ENCODE measurements at regions of chr16 and their contacts with region 1.

Region 1: GRCh38 chr16:23729503-23730424 is 16.7 kb upstream of the ERN2 start:
- DNase-seq: peak; percentile 15
- H3K4me3 ChIP-seq: no peak overlapping the region
- H3K27ac ChIP-seq: no peak overlapping the region
- H3K4me1 ChIP-seq: no peaks in the 10 kb centered on the region
- H3K27me3 ChIP-seq: no peaks in the 10 kb centered on the region
- CTCF ChIP-seq: no peak

Region 2: DNA sequence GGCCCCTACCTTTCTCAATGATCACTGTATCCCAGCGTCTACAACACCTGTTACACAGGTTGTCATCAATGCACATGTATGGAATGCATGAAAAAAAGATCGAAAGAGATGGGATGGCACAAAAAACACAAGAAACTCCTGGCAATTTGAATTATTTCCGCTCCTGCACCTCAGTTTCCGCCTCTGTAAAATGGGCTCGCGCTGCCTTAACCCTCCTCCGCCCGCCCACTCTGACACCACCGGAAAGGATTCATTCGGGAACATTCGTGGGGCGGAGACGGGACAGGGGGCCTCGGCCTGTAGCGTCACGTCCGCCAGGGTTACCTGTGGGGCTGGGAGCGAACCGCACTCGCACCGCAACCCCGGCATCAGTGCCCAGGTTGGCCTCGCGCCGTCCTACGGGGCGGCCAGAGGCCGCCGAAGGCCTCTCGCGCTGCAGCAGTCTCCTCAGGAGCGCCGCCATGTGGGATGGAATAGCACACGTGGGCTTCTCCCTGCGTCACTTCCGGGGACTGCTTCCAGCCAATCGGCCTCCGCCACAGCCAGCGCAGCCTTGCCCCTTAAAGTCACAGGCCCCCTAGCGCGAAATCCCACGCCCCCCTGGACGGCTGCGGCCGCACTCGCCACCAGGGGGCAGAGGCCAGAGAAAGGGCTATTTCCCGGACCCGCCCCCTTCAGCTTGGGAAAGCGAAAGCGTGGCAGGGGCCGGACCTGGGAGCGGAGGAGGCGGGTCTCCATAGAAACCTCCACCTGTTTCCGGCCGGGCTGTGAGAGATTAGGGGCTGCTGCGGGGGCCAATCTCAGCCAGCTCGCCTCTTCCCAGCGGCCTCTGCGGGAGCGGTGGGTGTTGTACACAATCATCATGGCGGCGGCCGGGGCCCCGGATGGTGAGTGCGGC is 172.6 kb before region 1 on chr16 and contains the starts of genes EARS2 and UBFD1:
- CTCF ChIA-PET with region 1: no interaction called
- dilution Hi-C with region 1: no loop called
- in situ Hi-C with region 1: no loop called
- intact Hi-C with region 1: loop called (anchors 5 kb)
- DNase-seq: peak; percentile 99
- H3K4me3 ChIP-seq: peak within 1 kb of the TSS; percentile 92 to 96 (median 95)
- H3K27ac ChIP-seq: peak within 1 kb of the TSS; percentile 91
- H3K4me1 ChIP-seq: peaks cover 11% of the 10 kb centered on the region
- H3K27me3 ChIP-seq: no peaks in the 10 kb centered on the region
- CTCF ChIP-seq: peak; percentile 75 to 96
- total RNA-seq, gene EARS2: 30.1 to 47.7 TPM
- total RNA-seq, gene UBFD1: 57.3 to 79.7 TPM

Region 3: GRCh38 chr16:23668225-23668624 is 61.5 kb before region 1 on chr16:
- CTCF ChIA-PET with region 1: no interaction called
- dilution Hi-C with region 1: no loop called
- in situ Hi-C with region 1: no loop called
- intact Hi-C with region 1: no loop called
- DNase-seq: no peak
- H3K4me3 ChIP-seq: no peak overlapping the region
- H3K27ac ChIP-seq: no peak overlapping the region
- H3K4me1 ChIP-seq: peaks cover 21% of the 10 kb centered on the region
- H3K27me3 ChIP-seq: no peaks in the 10 kb centered on the region
- CTCF ChIP-seq: no peak

Region 4: DNA sequence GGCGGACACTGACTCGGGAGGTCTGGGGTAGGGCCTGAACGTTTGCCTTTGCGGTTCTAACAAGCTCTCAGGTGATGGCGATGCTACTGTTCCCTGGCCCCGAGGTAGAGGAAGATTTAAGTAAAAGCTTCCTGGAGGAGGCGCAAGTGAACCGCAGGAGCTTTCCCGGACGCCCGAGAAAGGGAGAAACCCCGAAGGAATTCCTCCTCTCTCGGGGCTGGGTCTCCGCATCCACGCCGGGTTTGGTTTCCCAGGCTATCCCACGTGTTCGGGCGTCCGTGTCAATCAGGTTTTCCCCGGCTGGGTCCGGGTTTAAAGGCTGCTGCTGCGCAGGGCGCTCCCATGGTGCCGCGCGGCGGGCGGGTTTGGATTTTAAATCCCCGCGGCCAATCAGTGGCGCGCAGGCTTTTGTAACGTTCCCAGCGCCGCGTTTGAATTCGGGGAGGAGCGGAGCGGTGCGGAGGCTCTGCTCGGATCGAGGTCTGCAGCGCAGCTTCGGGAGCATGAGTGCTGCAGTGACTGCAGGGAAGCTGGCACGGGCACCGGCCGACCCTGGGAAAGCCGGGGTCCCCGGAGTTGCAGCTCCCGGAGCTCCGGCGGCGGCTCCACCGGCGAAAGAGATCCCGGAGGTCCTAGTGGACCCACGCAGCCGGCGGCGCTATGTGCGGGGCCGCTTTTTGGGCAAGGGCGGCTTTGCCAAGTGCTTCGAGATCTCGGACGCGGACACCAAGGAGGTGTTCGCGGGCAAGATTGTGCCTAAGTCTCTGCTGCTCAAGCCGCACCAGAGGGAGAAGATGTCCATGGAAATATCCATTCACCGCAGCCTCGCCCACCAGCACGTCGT is 51.1 kb before region 1 on chr16 and contains the start of gene PLK1:
- CTCF ChIA-PET with region 1: interaction called, 9 read pairs
- dilution Hi-C with region 1: no loop called
- in situ Hi-C with region 1: no loop called
- intact Hi-C with region 1: loop called (anchors 5 kb)
- DNase-seq: peak; percentile 86
- H3K4me3 ChIP-seq: peak within 1 kb of the TSS; percentile 66 to 98 (median 88)
- H3K27ac ChIP-seq: peak within 1 kb of the TSS; percentile 60
- H3K4me1 ChIP-seq: peaks cover 22% of the 10 kb centered on the region
- H3K27me3 ChIP-seq: no peaks in the 10 kb centered on the region
- CTCF ChIP-seq: peak; percentile 12 to 55
- total RNA-seq, gene PLK1: 2.0 to 57.9 TPM

Region 5: DNA sequence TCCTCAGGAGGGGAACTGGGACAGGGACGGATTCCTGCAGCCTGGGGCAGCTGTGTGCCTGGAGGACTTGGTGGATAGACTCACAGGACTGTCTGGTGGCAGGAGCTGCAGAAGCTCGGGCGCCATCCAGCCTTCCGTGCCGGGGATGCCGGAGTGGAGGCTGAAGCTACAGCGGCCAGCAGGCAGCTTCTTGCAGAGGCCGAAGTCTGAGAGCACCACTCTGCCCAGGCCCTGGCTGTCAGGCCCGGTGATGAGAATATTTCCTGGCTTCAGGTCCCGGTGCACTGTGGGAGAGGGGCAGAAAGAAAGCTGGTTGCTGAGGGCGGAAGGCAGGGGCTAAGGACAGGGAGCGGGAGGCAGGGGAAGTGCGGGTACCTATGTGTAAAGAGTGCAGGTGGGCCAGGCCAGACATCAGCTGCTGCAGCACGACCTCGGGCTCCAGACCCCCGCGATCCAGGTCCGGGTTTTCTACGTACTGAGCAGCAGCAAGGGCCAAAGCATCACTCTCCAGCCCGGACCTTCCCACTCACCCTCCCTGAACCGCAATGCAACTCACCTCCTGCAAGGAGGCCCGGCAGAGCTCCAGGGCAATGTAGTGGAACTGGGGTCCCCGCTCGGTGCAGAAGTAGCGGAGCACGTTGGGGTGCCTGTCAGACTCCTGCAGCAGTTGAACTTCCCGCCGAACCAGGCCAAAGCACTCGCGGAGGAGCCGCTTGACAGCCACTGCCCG is 35.0 kb before region 1 on chr16:
- CTCF ChIA-PET with region 1: no interaction called
- dilution Hi-C with region 1: loop called (anchors 5 kb)
- in situ Hi-C with region 1: no loop called
- intact Hi-C with region 1: no loop called
- DNase-seq: no peak
- H3K4me3 ChIP-seq: no peak overlapping the region
- H3K27ac ChIP-seq: no peak overlapping the region
- H3K4me1 ChIP-seq: no peaks in the 10 kb centered on the region
- H3K27me3 ChIP-seq: no peaks in the 10 kb centered on the region
- CTCF ChIP-seq: no peak

Region 6: GRCh38 chr16:23803591-23804123 is 73.9 kb after region 1 on chr16:
- CTCF ChIA-PET with region 1: interaction called, 3 read pairs
- dilution Hi-C with region 1: no loop called
- in situ Hi-C with region 1: loop called in 1 of 2 experiments (anchors 10 kb)
- intact Hi-C with region 1: no loop called
- DNase-seq: peak; percentile 38
- H3K4me3 ChIP-seq: no peak overlapping the region
- H3K27ac ChIP-seq: no peak overlapping the region
- H3K4me1 ChIP-seq: no peaks in the 10 kb centered on the region
- H3K27me3 ChIP-seq: no peaks in the 10 kb centered on the region
- CTCF ChIP-seq: peak; percentile 70 to 85

Region 7: DNA sequence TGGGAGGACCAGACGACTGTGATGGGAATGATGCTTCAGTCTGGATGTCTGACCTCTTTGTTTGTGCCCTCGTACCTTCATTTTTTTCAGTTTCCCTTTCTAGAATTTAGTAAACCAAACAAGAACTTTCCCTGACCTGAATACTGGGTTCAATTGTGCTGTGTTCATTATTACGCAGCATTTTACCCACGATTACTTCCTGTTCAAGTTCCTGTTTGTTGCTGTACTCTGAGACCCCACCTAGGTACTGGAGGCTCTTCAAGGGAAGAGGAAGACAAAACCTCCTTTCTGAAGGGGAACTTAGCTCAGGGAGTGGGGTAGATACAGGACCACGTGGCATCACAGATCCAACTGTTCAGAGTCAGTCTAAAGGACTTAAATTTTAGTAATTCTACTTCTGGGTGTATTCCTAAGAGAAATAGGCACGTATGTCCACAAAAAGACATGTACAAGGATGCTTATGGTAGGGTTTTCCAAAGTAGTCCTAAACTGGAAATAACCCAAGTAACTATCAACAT is 96.8 kb after region 1 on chr16:
- CTCF ChIA-PET with region 1: no interaction called
- dilution Hi-C with region 1: no loop called
- in situ Hi-C with region 1: no loop called
- intact Hi-C with region 1: no loop called
- DNase-seq: no peak
- H3K4me3 ChIP-seq: no peak overlapping the region
- H3K27ac ChIP-seq: no peak overlapping the region
- H3K4me1 ChIP-seq: no peaks in the 10 kb centered on the region
- H3K27me3 ChIP-seq: no peaks in the 10 kb centered on the region
- CTCF ChIP-seq: no peak

Measured in mammary epithelial cell (primary cell).